CD8-positive, alpha-beta memory T cell (primary cell): ENCODE measurements at regions of chr16 and their contacts with region 1.

Region 1: GRCh38 chr16:12095275-12096156 is 119.0 kb downstream of the SNX29 start:
- DNase-seq: peak; percentile 34 to 63 (median 56)
- H3K4me3 ChIP-seq: peak overlapping the region; percentile 6
- H3K4me3 Mint-ChIP-seq: peak overlapping the region; percentile 1 to 84 (median 66)
- H3K27ac ChIP-seq: no peak overlapping the region
- H3K27ac Mint-ChIP-seq: peak overlapping the region in 5 of 8 donors; percentile 4 to 74 (median 39)
- H3K4me1 ChIP-seq: peaks cover 10% of the 10 kb centered on the region
- H3K4me1 Mint-ChIP-seq: peaks cover 9 to 20% (median 14%) of the 10 kb centered on the region in 3 donors
- H3K27me3 ChIP-seq: no peaks in the 10 kb centered on the region
- H3K27me3 Mint-ChIP-seq: no peaks in the 10 kb centered on the region

Region 2: DNA sequence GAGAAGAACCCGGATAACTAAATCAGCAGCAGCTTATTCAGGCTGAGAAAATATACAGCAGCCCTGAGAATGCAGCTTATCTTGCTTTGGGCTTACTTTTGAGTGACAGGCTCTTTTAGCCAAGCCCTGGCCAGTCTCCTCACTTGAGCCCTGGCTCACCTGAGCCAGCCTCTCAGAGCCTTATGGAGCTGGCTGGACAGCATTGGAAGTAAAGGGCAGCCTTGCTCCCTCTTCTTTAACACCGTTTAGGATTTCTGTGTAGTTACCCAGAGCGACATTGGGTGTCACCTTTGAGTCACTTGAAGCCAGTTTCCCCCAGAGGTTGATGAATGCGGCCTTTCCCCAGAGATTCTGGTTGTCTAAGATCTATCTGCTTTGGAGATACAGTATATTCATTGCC is 146.0 kb before region 1 on chr16:
- CTCF ChIA-PET with region 1: no interaction called
- POLR2A ChIA-PET with region 1: no interaction called
- DNase-seq: no peak
- H3K4me3 ChIP-seq: no peak overlapping the region
- H3K4me3 Mint-ChIP-seq: no peak overlapping the region
- H3K27ac ChIP-seq: no peak overlapping the region
- H3K27ac Mint-ChIP-seq: no peak overlapping the region
- H3K4me1 ChIP-seq: no peaks in the 10 kb centered on the region
- H3K4me1 Mint-ChIP-seq: no peaks in the 10 kb centered on the region
- H3K27me3 ChIP-seq: no peaks in the 10 kb centered on the region
- H3K27me3 Mint-ChIP-seq: no peaks in the 10 kb centered on the region

Region 3: GRCh38 chr16:12079412-12079965 is 16.0 kb before region 1 on chr16:
- CTCF ChIA-PET with region 1: interaction called, 38 read pairs
- POLR2A ChIA-PET with region 1: interaction called, 5 read pairs
- DNase-seq: peak in 2 of 5 donors; percentile 24 to 54
- H3K4me3 ChIP-seq: peak overlapping the region; percentile 1
- H3K4me3 Mint-ChIP-seq: peak overlapping the region; percentile 55 to 92 (median 64)
- H3K27ac ChIP-seq: peak overlapping the region; percentile 25
- H3K27ac Mint-ChIP-seq: peak overlapping the region; percentile 76 to 97 (median 92)
- H3K4me1 ChIP-seq: peaks cover 68% of the 10 kb centered on the region
- H3K4me1 Mint-ChIP-seq: peaks cover 61 to 82% (median 73%) of the 10 kb centered on the region in 3 donors
- H3K27me3 ChIP-seq: no peaks in the 10 kb centered on the region
- H3K27me3 Mint-ChIP-seq: no peaks in the 10 kb centered on the region

Region 4: GRCh38 chr16:12110361-12111107 is 15.0 kb after region 1 on chr16:
- CTCF ChIA-PET with region 1: interaction called, 18 read pairs
- POLR2A ChIA-PET with region 1: interaction called, 4 read pairs
- DNase-seq: no peak
- H3K4me3 ChIP-seq: no peak overlapping the region
- H3K4me3 Mint-ChIP-seq: no peak overlapping the region
- H3K27ac ChIP-seq: no peak overlapping the region
- H3K27ac Mint-ChIP-seq: no peak overlapping the region
- H3K4me1 ChIP-seq: no peaks in the 10 kb centered on the region
- H3K4me1 Mint-ChIP-seq: peaks cover 2 to 4% (median 4%) of the 10 kb centered on the region in 3 donors
- H3K27me3 ChIP-seq: no peaks in the 10 kb centered on the region
- H3K27me3 Mint-ChIP-seq: no peaks in the 10 kb centered on the region

Region 5: DNA sequence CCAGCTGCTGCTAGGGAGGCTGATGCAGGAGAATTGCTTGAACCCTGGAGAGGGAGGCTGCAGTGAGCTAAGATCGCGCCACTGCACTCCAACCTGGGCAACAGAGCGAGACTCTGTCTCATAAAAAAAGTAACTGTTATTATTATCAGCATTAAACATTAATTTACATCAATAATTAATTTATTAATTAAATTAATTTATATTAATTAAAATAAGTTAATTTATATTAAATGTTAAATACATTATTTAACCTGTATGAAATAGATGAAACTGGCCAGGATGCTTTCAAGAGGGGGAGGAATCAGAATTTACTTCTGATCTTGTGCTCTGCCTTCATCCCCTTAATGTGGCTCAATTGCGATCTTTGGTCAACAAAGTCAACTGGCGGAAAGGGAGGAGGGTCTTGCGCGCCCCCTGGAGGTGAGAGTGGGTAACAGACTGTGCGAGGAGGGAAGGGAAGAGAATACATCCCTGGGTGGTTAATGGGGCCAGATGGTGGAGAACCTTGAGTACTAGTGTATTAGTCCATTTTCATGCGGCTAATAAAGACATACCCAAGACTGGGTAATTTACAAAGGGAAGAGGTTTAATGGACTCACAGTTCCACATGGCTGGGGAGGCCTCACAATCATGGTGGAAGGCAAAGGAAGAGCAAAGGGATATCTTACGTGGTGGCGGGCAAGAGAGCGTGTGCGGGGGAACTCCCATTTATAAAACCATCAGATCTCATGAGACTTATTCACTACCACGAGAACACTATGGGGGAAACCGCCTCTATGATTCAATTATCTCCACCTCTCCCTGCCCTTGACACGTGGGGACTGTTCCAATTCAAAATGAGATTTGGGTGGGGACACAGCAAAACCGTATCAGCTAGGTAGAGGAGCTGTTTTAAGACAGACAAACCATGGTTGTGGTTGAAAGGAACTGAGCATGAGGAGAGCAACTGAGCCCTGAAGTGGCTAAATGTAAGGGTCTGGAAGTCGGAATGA is 723.9 kb after region 1 on chr16:
- CTCF ChIA-PET with region 1: interaction called, 14 read pairs
- POLR2A ChIA-PET with region 1: no interaction called
- DNase-seq: peak; percentile 46 to 74 (median 57)
- H3K4me3 ChIP-seq: no peak overlapping the region
- H3K4me3 Mint-ChIP-seq: no peak overlapping the region
- H3K27ac ChIP-seq: no peak overlapping the region
- H3K27ac Mint-ChIP-seq: no peak overlapping the region
- H3K4me1 ChIP-seq: no peaks in the 10 kb centered on the region
- H3K4me1 Mint-ChIP-seq: peaks cover 0 to 5% (median 0%) of the 10 kb centered on the region in 3 donors
- H3K27me3 ChIP-seq: no peaks in the 10 kb centered on the region
- H3K27me3 Mint-ChIP-seq: peaks cover 8 to 12% of the 10 kb centered on the region in 2 donors